Activated T-helper 2 cell treated with anti-CD3 and anti-CD28 coated beads, Interferon-gamma antibody, Interleukin-2, Interleukin-4, amounts not matched to agents 10 μg/mL and 5 μg/mL and 100 μg/mL, durations not matched to agents 14 hours and 24 hours and 36 hours (primary cell): ENCODE measurements at regions of chr17 and their contacts with region 1.

Region 1: GRCh38 chr17:28871056-28871579 is 16.3 kb downstream of the ERAL1 start:
- DNase-seq: peak; percentile 39
- H3K4me3 Mint-ChIP-seq: no peak overlapping the region
- H3K27ac Mint-ChIP-seq: peak overlapping the region; percentile 97
- H3K4me1 Mint-ChIP-seq: peaks cover 15% of the 10 kb centered on the region
- H3K27me3 Mint-ChIP-seq: no peaks in the 10 kb centered on the region

Region 2: GRCh38 chr17:28298449-28298848 is 572.7 kb before region 1 on chr17:
- intact Hi-C with region 1: no loop called
- DNase-seq: no peak
- H3K4me3 Mint-ChIP-seq: no peak overlapping the region
- H3K27ac Mint-ChIP-seq: no peak overlapping the region
- H3K4me1 Mint-ChIP-seq: peaks cover 13% of the 10 kb centered on the region
- H3K27me3 Mint-ChIP-seq: peaks cover 9% of the 10 kb centered on the region

Region 3: DNA sequence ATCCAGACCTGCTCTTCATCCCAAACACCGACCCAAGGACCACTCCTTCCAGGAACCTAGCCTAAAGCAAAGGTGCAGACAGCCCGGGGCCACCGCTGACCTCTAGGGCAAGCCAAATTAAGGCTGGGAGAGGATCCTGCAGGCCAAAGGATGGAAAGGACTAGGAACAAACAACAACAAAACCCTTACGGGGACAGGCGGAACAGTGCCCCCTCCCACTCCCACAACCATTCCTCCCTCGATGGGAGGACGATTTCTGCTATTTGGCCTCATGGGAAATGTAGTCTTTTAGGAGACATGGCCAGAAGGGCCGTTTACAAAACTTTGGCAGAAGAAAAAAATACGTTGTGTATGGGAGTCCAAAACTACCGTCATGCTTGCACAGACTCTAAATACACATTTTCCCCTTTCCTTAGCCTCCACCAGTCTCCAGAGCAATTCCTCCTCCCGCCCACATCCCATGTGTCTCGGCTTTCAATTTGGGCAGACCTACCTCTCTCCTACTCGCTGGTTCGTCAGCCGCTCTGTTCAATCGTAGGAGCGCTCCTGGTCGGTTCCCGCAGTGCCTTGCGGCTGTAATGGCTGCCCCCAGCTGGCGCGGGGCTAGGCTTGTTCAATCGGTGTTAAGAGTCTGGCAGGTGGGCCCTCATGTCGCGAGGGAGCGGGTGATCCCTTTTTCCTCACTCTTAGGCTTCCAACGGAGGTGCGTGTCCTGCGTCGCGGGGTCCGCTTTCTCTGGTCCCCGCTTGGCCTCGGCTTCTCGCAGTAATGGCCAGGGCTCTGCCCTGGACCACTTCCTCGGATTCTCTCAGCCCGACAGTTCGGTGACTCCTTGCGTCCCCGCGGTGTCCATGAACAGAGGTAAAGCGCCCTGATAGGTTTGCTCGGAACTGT is 16.4 kb before region 1 on chr17 and contains the start of gene ERAL1:
- intact Hi-C with region 1: loop called (anchors 1 kb)
- DNase-seq: peak; percentile 81
- H3K4me3 Mint-ChIP-seq: peak within 1 kb of the TSS; percentile 86
- H3K27ac Mint-ChIP-seq: peak within 1 kb of the TSS; percentile 89
- H3K4me1 Mint-ChIP-seq: peaks cover 24% of the 10 kb centered on the region
- H3K27me3 Mint-ChIP-seq: no peaks in the 10 kb centered on the region
- total RNA-seq, gene ERAL1: 54.5 and 60.4 TPM in 2 replicates

Region 4: GRCh38 chr17:28889996-28890395 is 18.9 kb after region 1 on chr17:
- intact Hi-C with region 1: no loop called
- DNase-seq: no peak
- H3K4me3 Mint-ChIP-seq: no peak overlapping the region
- H3K27ac Mint-ChIP-seq: peak overlapping the region; percentile 13
- H3K4me1 Mint-ChIP-seq: peaks cover 39% of the 10 kb centered on the region
- H3K27me3 Mint-ChIP-seq: no peaks in the 10 kb centered on the region